Mucosa of descending colon (tissue), 3 donors: ENCODE measurements at regions of chr15 and their contacts with region 1.

Region 1: DNA sequence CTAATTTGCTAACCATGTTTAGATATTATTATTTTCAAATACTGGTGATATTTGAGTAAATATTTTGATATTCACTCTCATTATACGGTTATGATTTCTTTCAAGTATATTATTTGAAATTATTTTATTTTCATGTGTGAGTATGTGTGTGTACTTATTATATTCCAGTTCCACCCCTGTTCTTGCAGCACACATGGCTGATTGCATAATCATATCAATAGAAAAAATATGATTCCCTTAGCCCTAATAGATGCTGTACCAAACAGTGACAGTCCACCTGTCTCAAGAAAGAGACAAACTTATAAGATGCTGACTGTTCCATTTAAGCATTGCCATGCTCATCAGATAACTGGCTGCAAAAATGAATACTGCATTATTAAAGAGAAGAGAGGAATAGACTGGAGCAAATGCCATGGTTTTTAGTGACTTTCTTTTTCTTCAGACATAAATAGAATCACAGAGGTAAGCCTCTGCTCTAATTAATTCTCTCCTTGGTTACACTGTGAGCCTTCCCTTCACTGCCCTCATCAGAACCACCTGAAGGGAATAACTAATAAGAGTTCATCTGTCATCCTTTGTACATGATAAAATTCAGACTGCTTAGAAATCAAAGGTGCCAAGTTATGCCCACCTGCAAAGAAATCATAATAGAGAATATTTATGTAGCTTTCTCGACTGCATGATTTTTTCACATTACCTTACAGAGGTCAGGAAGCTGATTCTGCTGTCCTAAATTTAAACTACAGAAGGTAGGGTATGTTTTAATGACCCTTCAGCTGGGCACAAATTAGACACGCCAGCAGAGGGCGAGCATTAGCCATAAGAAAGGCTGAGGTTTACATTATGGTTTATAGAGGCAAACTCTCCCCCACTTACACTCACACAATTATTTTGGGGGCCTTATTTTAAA is 15.7 kb upstream of the UNC13C start:
- DNase-seq: peak in 2 of 3 donors; percentile 38 to 73
- ATAC-seq: no peak
- H3K4me3 ChIP-seq: no peak overlapping the region
- H3K4me1 ChIP-seq: no peaks in the 10 kb centered on the region
- CTCF ChIP-seq: no peak

Region 2: GRCh38 chr15:53811530-53811929 is 151.1 kb before region 1 on chr15:
- intact Hi-C with region 1: loop called in 1 of 2 experiments (anchors 5 kb)
- DNase-seq: peak in 1 of 3 donors; percentile 54
- ATAC-seq: peak; percentile 59
- H3K4me3 ChIP-seq: no peak overlapping the region
- H3K4me1 ChIP-seq: no peaks in the 10 kb centered on the region
- CTCF ChIP-seq: no peak

Region 3: DNA sequence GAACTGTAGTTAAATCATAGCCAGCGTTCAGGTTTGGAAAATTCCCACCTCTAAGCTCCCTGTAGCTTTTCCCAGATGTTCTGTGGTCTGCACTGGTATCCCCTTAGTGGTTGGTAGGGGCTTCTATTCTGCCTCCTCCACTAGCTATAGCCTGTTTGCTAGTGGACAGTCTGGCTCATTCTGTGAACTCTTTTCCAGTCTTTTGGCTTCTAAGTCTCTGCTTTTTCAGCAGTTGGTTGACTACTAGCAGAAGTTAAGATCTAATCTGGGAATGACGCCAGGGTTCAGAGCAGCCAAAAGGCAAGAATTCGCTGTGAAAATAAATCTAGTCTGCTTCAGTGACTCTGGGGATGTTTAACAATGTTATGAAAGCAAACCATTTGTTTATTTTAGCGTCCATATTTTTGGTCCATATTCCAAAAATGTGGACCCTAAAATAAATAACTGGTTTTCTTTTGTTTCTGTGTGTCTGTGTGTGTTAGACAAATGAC is 129.4 kb before region 1 on chr15:
- intact Hi-C with region 1: no loop called
- DNase-seq: peak in 1 of 3 donors; percentile 41
- ATAC-seq: no peak
- H3K4me3 ChIP-seq: no peak overlapping the region
- H3K4me1 ChIP-seq: peaks cover 24% of the 10 kb centered on the region
- CTCF ChIP-seq: no peak

Region 4: DNA sequence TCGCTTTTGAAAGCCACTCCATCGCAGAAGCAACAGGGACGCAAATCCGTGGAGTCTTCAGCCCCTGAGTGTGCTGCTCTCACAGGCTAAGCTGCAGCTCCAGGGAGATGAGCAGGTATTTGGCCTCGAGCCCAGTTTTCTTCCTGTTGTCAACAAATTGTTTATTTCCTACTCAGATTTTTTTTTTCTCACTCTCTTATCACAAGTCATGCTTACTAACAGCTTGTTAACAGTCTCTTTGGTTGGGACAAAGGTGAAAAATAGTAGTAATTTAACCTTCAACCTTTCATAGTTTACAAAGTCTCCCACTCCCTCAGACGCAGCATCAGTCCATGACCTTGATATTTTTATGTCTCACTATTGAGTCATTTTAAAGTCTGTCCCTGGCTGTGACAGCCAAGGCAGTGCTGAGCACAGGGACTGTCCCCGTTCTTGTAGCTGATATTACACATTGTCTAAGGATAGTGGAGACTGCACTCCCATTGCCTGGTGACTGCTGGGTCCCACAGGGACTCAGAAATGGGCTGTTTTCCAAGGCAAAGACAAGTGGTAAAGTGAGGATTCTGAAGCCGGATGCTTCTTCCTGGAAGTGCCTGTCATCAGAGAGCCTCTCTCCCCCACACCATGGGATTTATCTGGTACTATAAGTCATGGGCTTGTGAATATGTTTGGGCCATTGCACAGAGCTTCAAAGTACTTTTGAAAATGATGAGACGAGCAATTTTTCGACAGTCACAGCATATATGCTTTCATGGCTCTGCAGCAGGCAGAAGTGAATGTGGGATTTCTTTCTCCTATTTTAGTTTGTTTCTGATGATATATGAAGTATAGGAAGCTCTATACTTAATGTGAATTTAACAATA is 44.2 kb before region 1 on chr15:
- intact Hi-C with region 1: no loop called
- DNase-seq: no peak
- ATAC-seq: no peak
- H3K4me3 ChIP-seq: no peak overlapping the region
- H3K4me1 ChIP-seq: no peaks in the 10 kb centered on the region
- CTCF ChIP-seq: no peak